Panc1 (cell line): ENCODE measurements at regions of chr4 and their contacts with region 1.

Region 1: DNA sequence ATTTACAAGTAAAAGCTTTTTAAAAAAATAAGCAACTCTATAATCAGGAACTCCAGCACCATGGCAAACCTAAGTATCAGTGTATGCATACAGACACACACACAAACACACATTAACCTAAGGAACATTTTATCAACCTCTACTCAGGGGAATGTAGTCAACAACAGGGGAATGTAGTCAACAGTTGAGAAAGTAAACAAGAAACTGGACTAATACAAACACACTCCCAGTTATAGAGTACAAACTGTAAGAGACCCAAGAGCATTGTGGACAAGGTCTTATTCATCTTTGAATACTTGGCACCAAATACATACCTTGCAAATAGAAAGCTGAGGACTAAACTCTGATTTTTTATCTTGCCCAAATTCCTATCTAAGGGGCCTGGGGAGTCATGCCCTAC is 36.2 kb downstream of the PAPSS1 start:
- DNase-seq: no peak
- ATAC-seq: peak; percentile 74; the same call in 1 of the 2 replicates
- H3K4me3 ChIP-seq: no peak overlapping the region
- H3K27ac ChIP-seq: no peak overlapping the region
- H3K4me1 ChIP-seq: 0 out of 2 replicates have a peak, but pooled peaks cover 3% of the 10 kb centered on the region
- H3K27me3 ChIP-seq: no peaks in the 10 kb centered on the region
- CTCF ChIP-seq: no peak

Region 2: GRCh38 chr4:107548211-107548905 is 135.5 kb before region 1 on chr4:
- CTCF ChIA-PET with region 1: no interaction called
- POLR2A ChIA-PET with region 1: no interaction called
- in situ Hi-C with region 1: no loop called
- intact Hi-C with region 1: no loop called
- DNase-seq: no peak
- ATAC-seq: no peak
- H3K4me3 ChIP-seq: no peak overlapping the region
- H3K27ac ChIP-seq: no peak overlapping the region
- H3K4me1 ChIP-seq: no peaks in the 10 kb centered on the region
- H3K27me3 ChIP-seq: no peaks in the 10 kb centered on the region
- CTCF ChIP-seq: no peak

Region 3: DNA sequence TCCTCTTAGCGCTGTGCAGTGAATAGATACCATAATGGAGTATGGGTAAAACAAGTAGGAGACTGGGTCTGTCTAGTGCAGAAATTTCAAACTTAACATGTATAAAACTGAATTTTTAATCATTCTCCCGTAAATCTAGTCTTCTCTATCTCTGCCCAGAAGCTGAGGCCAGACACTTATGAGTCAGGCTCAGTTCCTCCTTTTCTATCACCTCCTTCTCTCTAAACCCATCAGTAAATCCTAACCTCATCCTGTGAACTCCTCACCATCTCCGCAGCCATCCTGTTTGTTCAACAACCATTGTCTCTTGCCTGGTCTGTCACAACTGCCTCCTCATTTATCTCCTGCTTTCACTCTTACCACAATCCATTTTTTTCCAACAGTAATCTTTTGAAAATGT is 121.1 kb after region 1 on chr4:
- CTCF ChIA-PET with region 1: no interaction called
- POLR2A ChIA-PET with region 1: no interaction called
- in situ Hi-C with region 1: no loop called
- intact Hi-C with region 1: loop called (anchors 5 kb)
- DNase-seq: no peak
- ATAC-seq: no peak
- H3K4me3 ChIP-seq: no peak overlapping the region
- H3K27ac ChIP-seq: no peak overlapping the region
- H3K4me1 ChIP-seq: no peaks in the 10 kb centered on the region
- H3K27me3 ChIP-seq: no peaks in the 10 kb centered on the region
- CTCF ChIP-seq: no peak

Region 4: DNA sequence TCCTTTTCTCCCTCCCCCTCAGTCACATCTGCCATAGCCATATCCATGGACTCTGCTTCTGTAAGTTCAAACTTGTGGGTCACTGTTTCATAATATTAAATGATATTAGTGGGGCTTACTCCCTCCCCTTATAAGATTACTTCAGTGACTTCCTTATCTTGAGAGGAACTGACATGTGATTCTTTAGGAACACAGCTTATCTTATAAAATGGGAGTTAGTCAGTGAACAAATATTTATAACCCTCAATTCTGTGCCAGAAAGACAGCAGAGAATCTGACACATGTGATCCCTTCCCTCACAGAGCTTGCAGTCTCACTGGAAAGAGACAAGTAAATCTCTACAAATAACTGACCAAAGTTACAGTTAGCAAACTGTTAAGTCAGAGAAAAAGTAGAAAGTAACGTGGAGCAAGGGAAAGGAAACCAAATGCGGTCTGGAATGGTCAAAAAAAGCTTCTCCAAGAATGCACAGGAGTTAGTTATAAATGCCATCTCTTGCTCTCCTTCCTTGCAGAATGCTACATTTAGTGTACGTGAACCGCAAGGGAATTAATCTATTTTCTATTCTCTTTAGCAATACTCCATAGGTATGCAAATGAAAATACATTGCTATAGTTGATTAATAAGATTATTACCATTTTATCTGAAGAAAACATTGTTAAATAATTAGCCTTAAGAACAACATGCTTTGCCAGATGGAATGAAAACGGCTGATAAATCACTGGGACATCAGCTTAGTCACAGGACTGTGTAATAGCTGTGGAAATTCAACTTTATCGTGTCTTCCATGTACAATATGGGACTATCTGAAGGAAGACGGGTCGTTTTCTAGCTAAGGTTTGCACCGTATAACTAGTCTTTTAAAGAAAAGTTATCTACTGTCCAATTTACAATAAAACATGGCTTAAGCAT is 169.8 kb after region 1 on chr4:
- CTCF ChIA-PET with region 1: no interaction called
- POLR2A ChIA-PET with region 1: no interaction called
- in situ Hi-C with region 1: no loop called
- intact Hi-C with region 1: no loop called
- DNase-seq: no peak
- ATAC-seq: peak; percentile 34; the same call in 1 of the 2 replicates
- H3K4me3 ChIP-seq: no peak overlapping the region
- H3K27ac ChIP-seq: peak overlapping the region; percentile 48; the same call in 1 of the 2 replicates
- H3K4me1 ChIP-seq: peaks cover 8% of the 10 kb centered on the region; the same call in 1 of the 2 replicates
- H3K27me3 ChIP-seq: no peaks in the 10 kb centered on the region
- CTCF ChIP-seq: no peak

Region 5: DNA sequence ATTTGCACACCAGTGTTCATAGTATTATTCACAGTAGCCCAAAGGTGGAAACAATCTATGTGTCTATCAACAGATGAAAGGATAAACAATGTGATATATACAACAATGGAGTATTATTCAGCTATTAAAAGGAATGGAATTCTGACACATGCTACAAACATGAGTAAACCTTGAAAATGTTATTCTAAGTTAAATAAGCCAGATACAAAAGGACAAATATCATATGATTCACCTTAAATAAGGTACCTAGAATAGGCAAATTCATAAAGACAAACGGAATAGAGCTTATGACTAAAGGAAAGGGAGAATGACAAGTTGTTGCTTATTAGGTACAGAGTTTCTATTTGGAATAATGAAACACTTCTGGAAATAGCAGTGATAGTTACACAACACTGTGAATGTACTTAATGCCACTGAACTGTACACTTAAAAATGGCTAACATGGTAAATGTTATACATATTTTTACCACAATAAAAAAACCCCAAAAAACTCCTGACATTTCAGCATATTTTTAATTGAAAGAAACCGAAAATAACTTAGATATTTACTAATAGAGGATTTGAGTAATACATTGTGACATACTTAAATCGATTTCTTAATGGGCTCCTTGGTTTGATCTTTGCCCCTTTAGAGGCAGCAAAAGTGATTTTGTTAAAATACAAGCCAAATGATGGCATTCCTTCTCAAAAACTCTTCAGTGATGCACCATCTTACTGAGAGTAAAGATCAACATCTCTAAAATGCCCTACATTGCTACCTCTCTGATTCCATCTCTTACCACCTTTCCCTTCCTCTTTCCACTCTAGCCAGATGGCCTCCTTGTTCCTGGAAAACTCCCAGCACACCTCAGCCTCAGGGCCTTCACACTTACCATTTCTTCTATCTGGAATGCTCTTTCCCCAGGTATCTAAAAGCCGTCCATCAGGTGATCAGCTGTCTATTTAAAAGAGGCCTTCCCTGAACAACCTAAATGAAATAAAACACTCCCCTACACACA is 238.9 kb after region 1 on chr4:
- CTCF ChIA-PET with region 1: no interaction called
- POLR2A ChIA-PET with region 1: no interaction called
- in situ Hi-C with region 1: no loop called
- intact Hi-C with region 1: no loop called
- DNase-seq: no peak
- ATAC-seq: no peak
- H3K4me3 ChIP-seq: no peak overlapping the region
- H3K27ac ChIP-seq: no peak overlapping the region
- H3K4me1 ChIP-seq: no peaks in the 10 kb centered on the region
- H3K27me3 ChIP-seq: no peaks in the 10 kb centered on the region
- CTCF ChIP-seq: no peak

Region 6: DNA sequence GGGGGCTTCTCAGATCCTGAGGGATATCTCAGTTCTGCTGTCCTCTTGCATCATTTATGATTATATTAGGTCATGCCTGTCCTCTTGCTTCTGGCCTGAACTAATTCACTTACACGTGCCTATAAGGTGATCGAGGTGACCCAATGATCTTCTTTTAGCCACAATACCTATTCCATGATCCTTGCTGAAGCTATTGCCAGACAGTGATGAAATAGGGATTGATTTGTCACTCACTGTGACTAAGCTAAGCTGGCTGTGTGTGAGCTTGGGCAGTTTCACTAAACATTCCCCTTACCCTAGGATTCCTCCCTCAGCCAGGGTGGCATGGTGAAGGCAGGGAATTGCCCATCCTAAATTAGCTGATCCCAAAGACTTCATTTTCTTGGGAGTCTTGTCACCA is 324.8 kb after region 1 on chr4:
- CTCF ChIA-PET with region 1: no interaction called
- POLR2A ChIA-PET with region 1: no interaction called
- in situ Hi-C with region 1: no loop called
- intact Hi-C with region 1: no loop called
- DNase-seq: peak; percentile 25
- ATAC-seq: no peak
- H3K4me3 ChIP-seq: no peak overlapping the region
- H3K27ac ChIP-seq: no peak overlapping the region
- H3K4me1 ChIP-seq: no peaks in the 10 kb centered on the region
- H3K27me3 ChIP-seq: no peaks in the 10 kb centered on the region
- CTCF ChIP-seq: no peak